GM12878 (cell line): ENCODE measurements at regions of chr18 and their contacts with region 1.

Region 1: DNA sequence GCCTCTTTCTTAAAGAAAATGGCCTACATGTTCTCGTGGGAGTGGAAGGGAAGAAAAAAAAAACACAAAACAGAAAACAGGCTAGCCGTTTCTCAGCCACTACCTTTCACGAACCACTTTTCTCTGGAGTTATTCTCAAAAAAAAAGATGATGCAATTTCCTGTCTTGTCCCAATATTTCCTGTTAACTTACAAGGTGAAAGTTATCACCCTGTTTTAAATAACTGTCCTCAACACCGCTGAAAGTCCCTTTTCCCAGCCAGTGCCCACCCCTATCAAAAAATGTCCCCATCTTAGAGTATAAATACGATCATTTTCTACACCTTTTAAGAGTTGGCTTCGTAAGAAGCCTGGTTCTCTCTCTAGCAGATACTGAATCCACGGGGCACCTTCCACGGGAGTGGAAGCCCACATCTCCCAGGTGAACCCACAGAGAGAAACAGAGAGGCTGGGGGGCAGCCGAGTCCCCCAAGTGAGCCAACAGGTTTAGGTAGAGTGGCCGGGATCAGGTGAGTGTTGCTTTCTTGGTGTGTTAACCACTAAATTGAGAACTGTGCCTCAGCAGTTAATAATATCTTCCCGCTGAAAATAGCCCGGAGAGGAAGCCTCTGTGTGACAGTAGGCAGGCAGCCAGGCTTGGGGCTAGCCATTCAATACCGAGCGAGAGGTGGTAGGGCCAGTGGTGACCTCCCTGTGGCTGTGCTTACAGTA is 15.9 kb downstream of the SMAD7 start:
- DNase-seq: peak; percentile 71
- ATAC-seq: peak; percentile 71
- H3K4me3 ChIP-seq: peak overlapping the region; percentile 57
- H3K27ac ChIP-seq: peak overlapping the region; percentile 96
- H3K4me1 ChIP-seq: peaks cover 68% of the 10 kb centered on the region
- H3K27me3 ChIP-seq: no peaks in the 10 kb centered on the region
- CTCF ChIP-seq: no peak
- EP300 ChIP-seq: no peak; a peak in 1 of 4 replicates
- POLR2A ChIP-seq: peak; percentile 62; the same call in 1 of the 2 replicates
- RAD21 ChIP-seq: no peak

Region 2: GRCh38 chr18:48913201-48913600 is 21.7 kb before region 1 on chr18:
- CTCF ChIA-PET with region 1: interaction called, 3 read pairs
- POLR2A ChIA-PET with region 1: interaction called, 4 read pairs
- RAD21 ChIA-PET with region 1: interaction called, 12 read pairs
- SMC1A ChIA-PET with region 1: interaction called, 4 read pairs
- in situ Hi-C with region 1: no loop called
- intact Hi-C with region 1: no loop called
- DNase-seq: no peak
- ATAC-seq: peak; percentile 79
- H3K4me3 ChIP-seq: no peak overlapping the region
- H3K27ac ChIP-seq: no peak overlapping the region
- H3K4me1 ChIP-seq: peaks cover 10% of the 10 kb centered on the region
- H3K27me3 ChIP-seq: no peaks in the 10 kb centered on the region
- CTCF ChIP-seq: peak; percentile 38 to 51 (median 43); a peak in 5 of 6 replicates
- EP300 ChIP-seq: no peak
- POLR2A ChIP-seq: no peak
- RAD21 ChIP-seq: peak; percentile 34; the same call in 1 of the 2 replicates